B cell (primary cell): ENCODE measurements at regions of chr1 and their contacts with region 1.

Region 1: DNA sequence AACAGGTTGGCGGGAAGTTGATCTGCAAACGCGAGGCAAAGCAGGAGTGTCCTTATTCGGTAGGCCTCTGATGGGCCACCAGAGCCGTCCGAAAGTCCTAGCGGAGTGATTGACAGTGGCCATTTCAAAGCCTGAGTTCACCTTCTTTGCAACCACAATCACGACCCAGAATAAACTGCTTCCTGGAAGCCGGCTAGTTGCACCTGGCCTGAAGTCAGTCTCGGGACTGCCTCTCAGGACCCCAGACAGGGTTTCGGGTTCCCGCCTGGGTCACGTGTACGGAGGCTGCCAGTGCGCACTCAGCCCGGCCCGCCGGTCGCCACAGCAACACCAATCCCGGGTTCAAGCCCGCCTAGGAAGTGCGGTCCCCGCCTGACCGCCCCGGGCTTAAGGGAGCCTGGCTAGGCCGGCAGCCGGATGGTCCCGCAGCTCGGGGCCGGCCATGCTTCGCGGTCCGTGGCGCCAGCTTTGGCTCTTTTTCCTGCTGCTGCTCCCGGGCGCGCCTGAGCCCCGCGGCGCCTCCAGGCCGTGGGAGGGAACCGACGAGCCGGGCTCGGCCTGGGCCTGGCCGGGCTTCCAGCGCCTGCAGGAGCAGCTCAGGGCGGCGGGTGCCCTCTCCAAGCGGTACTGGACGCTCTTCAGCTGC is at the start of gene TOR3A:
- DNase-seq: peak; percentile 96
- ATAC-seq: peak; percentile 82
- H3K4me3 ChIP-seq: peak within 1 kb of the TSS; percentile 72 to 95 (median 87)
- H3K4me3 Mint-ChIP-seq: peak within 1 kb of the TSS; percentile 98
- H3K27ac ChIP-seq: peak within 1 kb of the TSS; percentile 94 to 95
- H3K27ac Mint-ChIP-seq: peak within 1 kb of the TSS; percentile 97
- H3K4me1 ChIP-seq: peaks cover 24 to 38% of the 10 kb centered on the region in 2 donors
- H3K4me1 Mint-ChIP-seq: peaks cover 49% of the 10 kb centered on the region
- H3K27me3 ChIP-seq: no peaks in the 10 kb centered on the region
- H3K27me3 Mint-ChIP-seq: no peaks in the 10 kb centered on the region
- CTCF ChIP-seq: no peak
- total RNA-seq, gene TOR3A: 49.1 and 49.9 TPM in 2 replicates

Region 2: DNA sequence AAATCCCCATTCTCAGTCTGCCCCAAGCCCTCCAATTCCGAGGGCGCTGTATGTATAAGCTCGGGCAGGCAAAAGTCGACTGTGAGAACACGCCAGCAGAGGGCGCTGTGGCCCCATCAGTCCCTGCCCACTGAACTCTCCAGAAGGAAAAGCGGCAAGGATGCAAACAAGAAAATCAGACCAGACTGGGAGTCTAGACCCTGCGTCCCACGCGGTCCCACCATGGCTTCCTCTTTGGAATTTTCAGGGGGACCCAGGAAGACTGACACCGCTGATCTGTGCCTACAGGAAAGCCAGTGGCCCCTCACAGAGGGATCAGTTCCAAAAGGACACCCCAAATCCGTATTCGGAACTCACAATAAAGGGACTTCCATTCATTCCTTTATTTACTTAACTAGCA is 549.4 kb before region 1 on chr1:
- CTCF ChIA-PET with region 1: interaction called, 12 read pairs
- POLR2A ChIA-PET with region 1: no interaction called
- intact Hi-C with region 1: loop called (anchors 5 kb)
- DNase-seq: peak; percentile 87
- ATAC-seq: peak; percentile 90
- H3K4me3 ChIP-seq: no peak overlapping the region
- H3K4me3 Mint-ChIP-seq: no peak overlapping the region
- H3K27ac ChIP-seq: no peak overlapping the region
- H3K27ac Mint-ChIP-seq: no peak overlapping the region
- H3K4me1 ChIP-seq: peaks cover 0 to 9% of the 10 kb centered on the region in 2 donors
- H3K4me1 Mint-ChIP-seq: peaks cover 4% of the 10 kb centered on the region
- H3K27me3 ChIP-seq: no peaks in the 10 kb centered on the region
- H3K27me3 Mint-ChIP-seq: no peaks in the 10 kb centered on the region
- CTCF ChIP-seq: peak; percentile 98

Region 3: GRCh38 chr1:178938959-178939317 is 142.9 kb before region 1 on chr1:
- CTCF ChIA-PET with region 1: no interaction called
- POLR2A ChIA-PET with region 1: no interaction called
- intact Hi-C with region 1: no loop called
- DNase-seq: no peak
- ATAC-seq: no peak
- H3K4me3 ChIP-seq: no peak overlapping the region
- H3K4me3 Mint-ChIP-seq: no peak overlapping the region
- H3K27ac ChIP-seq: no peak overlapping the region
- H3K27ac Mint-ChIP-seq: no peak overlapping the region
- H3K4me1 ChIP-seq: peaks cover 2 to 10% of the 10 kb centered on the region in 2 donors
- H3K4me1 Mint-ChIP-seq: peaks cover 14% of the 10 kb centered on the region
- H3K27me3 ChIP-seq: peaks cover 0 to 4% (median 0%) of the 10 kb centered on the region in 4 experiments
- H3K27me3 Mint-ChIP-seq: peaks cover 6% of the 10 kb centered on the region
- CTCF ChIP-seq: no peak

Region 4: DNA sequence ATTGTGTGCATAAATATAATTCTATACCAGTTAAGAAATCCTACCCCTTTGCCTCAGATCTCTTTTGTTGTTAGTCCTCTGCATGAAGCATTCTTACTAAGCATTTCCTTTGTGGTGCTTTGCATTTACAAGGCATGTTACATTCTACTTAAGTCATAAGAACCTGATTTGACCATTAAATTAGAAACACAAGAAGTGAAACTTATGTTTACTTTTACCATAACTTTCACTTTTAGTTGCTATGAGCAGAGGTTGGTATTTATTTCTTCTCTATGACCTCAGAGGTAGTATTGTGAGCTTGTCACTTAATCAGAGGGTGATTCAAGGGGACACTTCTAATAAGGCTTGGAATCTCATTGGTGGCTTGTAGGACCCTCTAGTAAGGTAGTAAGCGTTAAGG is 47.1 kb before region 1 on chr1:
- CTCF ChIA-PET with region 1: no interaction called
- POLR2A ChIA-PET with region 1: interaction called, 3 read pairs
- intact Hi-C with region 1: loop called (anchors 2 kb)
- DNase-seq: peak; percentile 70
- ATAC-seq: peak; percentile 84
- H3K4me3 ChIP-seq: peak overlapping the region in 2 of 5 experiments; percentile 2 to 8
- H3K4me3 Mint-ChIP-seq: peak overlapping the region; percentile 83
- H3K27ac ChIP-seq: peak overlapping the region; percentile 58 to 77
- H3K27ac Mint-ChIP-seq: peak overlapping the region; percentile 94
- H3K4me1 ChIP-seq: peaks cover 48 to 51% of the 10 kb centered on the region in 2 donors
- H3K4me1 Mint-ChIP-seq: peaks cover 86% of the 10 kb centered on the region
- H3K27me3 ChIP-seq: no peaks in the 10 kb centered on the region
- H3K27me3 Mint-ChIP-seq: no peaks in the 10 kb centered on the region
- CTCF ChIP-seq: no peak

Region 5: GRCh38 chr1:179194068-179194537 is 112.3 kb after region 1 on chr1:
- CTCF ChIA-PET with region 1: interaction called, 5 read pairs
- POLR2A ChIA-PET with region 1: no interaction called
- intact Hi-C with region 1: loop called (anchors 2 kb)
- DNase-seq: no peak
- ATAC-seq: no peak
- H3K4me3 ChIP-seq: no peak overlapping the region
- H3K4me3 Mint-ChIP-seq: no peak overlapping the region
- H3K27ac ChIP-seq: no peak overlapping the region
- H3K27ac Mint-ChIP-seq: no peak overlapping the region
- H3K4me1 ChIP-seq: peaks cover 4 to 5% of the 10 kb centered on the region in 2 donors
- H3K4me1 Mint-ChIP-seq: peaks cover 12% of the 10 kb centered on the region
- H3K27me3 ChIP-seq: no peaks in the 10 kb centered on the region
- H3K27me3 Mint-ChIP-seq: no peaks in the 10 kb centered on the region
- CTCF ChIP-seq: no peak

Region 6: DNA sequence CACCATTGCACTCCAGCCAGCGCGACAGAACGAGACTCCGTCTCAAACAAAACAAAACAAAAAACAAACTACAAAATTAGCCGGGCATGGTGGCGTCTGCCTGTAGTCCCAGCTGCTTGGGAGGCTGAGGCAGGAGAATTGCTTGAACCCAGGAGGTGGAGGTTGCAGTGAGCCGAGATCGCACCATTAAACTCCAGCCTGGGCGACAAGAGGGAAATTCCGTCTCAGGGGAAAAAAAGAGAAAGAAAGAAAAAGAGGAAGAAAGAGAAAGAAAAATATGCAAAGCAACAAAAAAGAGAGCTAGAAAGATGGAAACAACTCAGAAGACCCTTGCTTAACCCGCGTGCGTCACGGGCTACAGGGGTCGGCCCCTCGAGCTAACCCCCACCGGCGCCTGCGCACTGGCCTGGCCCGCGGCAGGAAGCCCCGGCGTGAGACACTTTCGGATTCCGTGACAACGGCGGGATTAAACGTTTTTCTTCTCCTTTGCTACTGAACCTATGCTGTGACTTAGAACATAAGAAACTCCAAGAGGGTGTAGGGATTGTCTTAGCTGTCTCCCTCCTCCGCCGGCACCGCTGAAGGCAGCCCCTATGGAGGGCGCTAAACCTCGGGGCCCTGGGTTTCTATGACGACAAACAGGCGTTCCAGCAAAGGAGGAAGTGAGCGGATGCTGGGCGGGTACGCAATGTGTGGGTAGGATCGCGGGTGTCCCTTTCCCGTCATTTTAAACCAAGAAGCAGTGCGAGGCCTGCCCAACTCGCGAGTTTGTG is 283.7 kb after region 1 on chr1 and contains the start of gene AXDND1:
- CTCF ChIA-PET with region 1: interaction called, 183 read pairs
- POLR2A ChIA-PET with region 1: interaction called, 10 read pairs
- intact Hi-C with region 1: loop called (anchors 1 kb)
- DNase-seq: peak; percentile 97
- ATAC-seq: peak; percentile 90
- H3K4me3 ChIP-seq: peak within 1 kb of the TSS; percentile 59 to 85 (median 74)
- H3K4me3 Mint-ChIP-seq: peak within 1 kb of the TSS; percentile 97
- H3K27ac ChIP-seq: peak within 1 kb of the TSS; percentile 93 to 100
- H3K27ac Mint-ChIP-seq: peak within 1 kb of the TSS; percentile 99
- H3K4me1 ChIP-seq: peaks cover 4 to 12% of the 10 kb centered on the region in 2 donors
- H3K4me1 Mint-ChIP-seq: peaks cover 7% of the 10 kb centered on the region
- H3K27me3 ChIP-seq: no peaks in the 10 kb centered on the region
- H3K27me3 Mint-ChIP-seq: no peaks in the 10 kb centered on the region
- CTCF ChIP-seq: no peak
- total RNA-seq, gene AXDND1: 0.90 and 1.1 TPM in 2 replicates

Region 7: DNA sequence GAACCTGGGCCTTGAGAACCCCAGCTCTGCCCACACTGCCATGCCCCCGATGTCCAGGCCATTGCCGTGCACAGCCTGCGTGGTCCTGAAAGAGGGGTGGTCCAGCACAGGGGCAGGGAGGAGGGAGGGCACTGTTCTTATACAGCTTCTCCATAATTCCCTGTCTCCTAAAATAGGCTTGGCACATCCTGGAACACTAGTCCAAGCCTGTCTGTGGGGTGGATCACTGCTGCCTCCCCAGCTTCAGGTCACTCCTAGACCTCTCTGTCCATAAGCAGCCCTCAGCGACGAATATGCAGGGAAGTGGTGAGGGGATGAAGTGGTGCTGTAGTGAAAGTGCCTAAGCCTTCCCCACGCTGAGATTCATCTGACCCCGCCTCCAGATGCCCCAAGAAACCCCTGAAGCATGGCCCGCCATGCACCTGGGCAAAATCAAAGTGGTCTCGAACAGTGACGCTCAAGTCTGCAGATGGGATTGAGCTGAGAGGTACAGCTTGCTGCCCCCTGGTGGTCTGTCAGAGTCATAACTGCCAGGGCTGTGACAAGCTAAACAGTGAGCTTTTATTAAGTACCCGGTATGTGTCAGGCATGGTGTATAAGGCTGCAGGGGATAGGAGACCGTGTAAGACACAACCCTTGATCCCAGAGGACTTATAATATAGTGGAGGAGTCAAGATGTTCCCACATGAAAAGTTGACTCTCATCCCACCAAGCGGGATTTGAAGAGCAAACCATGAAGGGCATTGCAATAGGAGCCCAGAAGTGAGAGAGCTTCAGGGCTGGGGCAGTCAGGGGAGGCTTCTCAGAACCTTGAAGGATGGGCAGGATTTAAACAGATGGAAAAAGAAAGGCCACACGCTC is 727.9 kb after region 1 on chr1:
- CTCF ChIA-PET with region 1: interaction called, 45 read pairs
- POLR2A ChIA-PET with region 1: interaction called, 3 read pairs
- intact Hi-C with region 1: loop called (anchors 1 kb)
- DNase-seq: peak; percentile 78
- ATAC-seq: peak; percentile 70
- H3K4me3 ChIP-seq: no peak overlapping the region
- H3K4me3 Mint-ChIP-seq: no peak overlapping the region
- H3K27ac ChIP-seq: no peak overlapping the region
- H3K27ac Mint-ChIP-seq: no peak overlapping the region
- H3K4me1 ChIP-seq: peaks cover 6 to 13% of the 10 kb centered on the region in 2 donors
- H3K4me1 Mint-ChIP-seq: peaks cover 7% of the 10 kb centered on the region
- H3K27me3 ChIP-seq: peaks cover 0 to 15% (median 4%) of the 10 kb centered on the region in 4 experiments
- H3K27me3 Mint-ChIP-seq: peaks cover 21% of the 10 kb centered on the region
- CTCF ChIP-seq: peak; percentile 90